ENCODE measurements at regions of chr2 and their contacts with region 1.

Region 1: GRCh38 chr2:85561317-85561979 is at the start of gene GGCX:
- DNase-seq: peak; percentile 95
- H3K4me3 ChIP-seq: peak within 1 kb of the TSS; percentile 69 to 70
- H3K27ac ChIP-seq: peak within 1 kb of the TSS; percentile 80 to 84
- H3K4me1 ChIP-seq: peaks cover 3% of the 10 kb centered on the region
- H3K27me3 ChIP-seq: no peaks in the 10 kb centered on the region
- CTCF ChIP-seq: peak in 3 of 4 experiments; percentile 46 to 77 (median 54)
- POLR2A ChIP-seq: peak; percentile 80
- total RNA-seq, gene GGCX: 17.8 to 52.7 TPM

Region 2: DNA sequence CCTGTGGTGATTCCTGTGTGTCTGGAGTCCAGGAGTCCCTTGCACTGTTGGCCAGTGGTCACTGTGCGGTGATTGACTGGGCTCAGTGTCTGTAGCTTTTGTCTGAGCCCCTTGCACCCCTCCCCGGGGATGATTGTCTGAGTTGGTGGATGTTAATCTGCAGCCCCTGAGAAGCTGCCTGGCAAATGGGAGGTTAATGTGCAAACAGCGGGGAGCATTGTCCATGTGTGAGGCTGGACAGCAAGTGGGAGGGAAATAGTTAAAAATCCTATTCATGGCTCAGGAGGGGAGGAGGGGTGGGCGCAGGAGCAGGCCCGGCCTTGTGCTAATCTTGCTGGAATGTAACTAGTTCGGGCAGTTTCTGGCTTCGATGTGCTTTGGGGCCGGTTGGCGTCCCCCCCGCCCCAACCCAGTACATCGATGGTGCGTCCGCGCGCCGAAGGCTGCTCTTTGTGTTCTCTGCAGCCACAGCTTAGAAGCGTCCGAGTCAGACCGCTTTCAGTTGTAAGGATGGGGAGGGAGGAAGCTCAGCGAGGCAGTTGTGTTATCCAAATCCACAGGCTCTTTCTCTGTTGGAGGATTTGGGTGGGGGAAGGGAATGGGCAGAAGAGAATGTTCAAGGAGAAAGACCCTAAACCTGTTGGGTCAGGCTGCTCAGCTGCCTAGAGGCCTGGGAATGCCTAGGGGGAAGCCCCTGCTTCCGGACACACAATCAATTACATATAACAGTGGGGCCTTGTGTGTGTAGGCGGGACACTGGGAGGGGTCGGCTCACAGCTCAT is 305.4 kb before region 1 on chr2:
- intact Hi-C with region 1: no loop called
- DNase-seq: peak; percentile 47
- H3K4me3 ChIP-seq: no peak overlapping the region
- H3K27ac ChIP-seq: peak overlapping the region in 1 of 2 donors; percentile 39
- H3K4me1 ChIP-seq: peaks cover 15% of the 10 kb centered on the region
- H3K27me3 ChIP-seq: no peaks in the 10 kb centered on the region
- CTCF ChIP-seq: no peak
- POLR2A ChIP-seq: no peak

Region 3: DNA sequence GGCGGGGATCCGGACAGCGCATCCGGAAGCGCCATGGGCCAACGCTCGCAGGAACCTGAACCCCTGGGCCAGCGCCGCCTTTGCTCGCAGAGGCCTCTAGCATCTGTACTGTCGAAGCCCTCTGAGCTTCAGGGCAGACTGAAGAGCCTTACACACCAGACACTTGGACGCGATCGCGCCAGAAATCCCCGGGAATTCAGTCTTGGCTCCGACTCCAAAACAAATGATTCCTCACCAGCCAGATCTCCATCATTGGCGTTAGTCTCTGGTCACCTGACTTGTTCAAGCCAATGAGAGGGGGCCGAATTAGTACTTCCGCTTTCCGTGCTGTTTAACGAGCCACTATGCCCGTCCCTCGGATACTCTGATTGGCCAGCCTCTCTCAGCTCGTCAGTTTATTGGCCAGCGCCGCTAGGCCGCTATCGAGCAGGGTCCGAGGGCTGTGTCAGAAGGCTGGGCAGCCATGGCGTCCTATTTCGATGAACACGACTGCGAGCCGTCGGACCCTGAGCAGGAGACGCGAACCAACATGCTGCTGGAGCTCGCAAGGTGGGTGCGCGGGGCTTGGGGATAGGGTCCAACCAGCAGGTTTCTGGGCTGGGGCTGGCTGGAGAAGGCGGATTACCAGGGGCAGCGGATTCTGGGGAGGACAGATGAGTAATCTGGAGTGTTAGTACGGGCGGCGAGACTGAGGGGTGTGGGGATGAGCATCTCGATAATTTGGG is 34.0 kb after region 1 on chr2 and contains the start of gene RNF181:
- intact Hi-C with region 1: loop called (anchors 5 kb)
- DNase-seq: peak; percentile 98
- H3K4me3 ChIP-seq: peak within 1 kb of the TSS; percentile 84 to 87
- H3K27ac ChIP-seq: peak within 1 kb of the TSS; percentile 89 to 93
- H3K4me1 ChIP-seq: peaks cover 12% of the 10 kb centered on the region
- H3K27me3 ChIP-seq: no peaks in the 10 kb centered on the region
- CTCF ChIP-seq: no peak
- POLR2A ChIP-seq: peak; percentile 89
- total RNA-seq, gene RNF181: 161 to 201 TPM

Region 4: DNA sequence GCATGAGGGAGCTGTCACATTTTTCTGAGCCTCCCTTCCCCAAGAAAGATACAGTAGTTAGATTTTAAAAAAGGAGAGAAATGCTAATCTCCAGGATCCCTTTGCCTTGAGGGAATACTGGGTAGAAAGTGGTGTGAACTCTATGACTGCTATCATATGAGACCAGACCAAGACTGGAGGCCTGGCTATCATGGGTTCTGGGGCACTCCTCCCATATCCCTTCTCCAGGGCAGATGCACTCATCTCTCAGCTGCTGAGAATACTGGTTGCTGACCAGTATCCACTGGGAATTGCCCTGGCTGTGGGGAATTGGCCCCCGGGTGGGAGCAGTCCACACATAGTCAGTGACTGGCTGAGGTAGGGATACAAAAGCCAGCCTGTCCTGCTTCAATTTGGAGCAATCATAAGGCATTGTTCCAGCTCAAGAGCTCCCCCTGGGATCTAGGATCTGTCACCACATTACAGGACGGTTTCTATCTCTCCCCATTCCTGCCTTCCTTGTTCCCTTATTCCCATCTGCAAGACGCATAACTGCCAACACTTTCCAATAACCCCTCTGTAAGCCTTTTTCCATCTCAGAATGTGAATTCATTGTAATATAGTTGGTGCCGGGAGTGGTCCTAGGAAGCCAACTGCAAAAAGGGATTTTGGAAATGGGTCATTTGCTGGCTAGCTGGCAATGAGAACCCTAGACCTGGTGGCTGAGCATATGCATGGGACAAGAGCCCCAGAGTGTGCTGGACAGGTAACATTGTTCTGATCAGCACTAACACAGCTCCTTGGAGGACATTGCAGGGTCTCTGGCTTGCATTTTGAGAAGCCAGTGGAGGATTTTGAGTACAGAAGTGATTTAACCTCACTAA is 811.4 kb after region 1 on chr2:
- intact Hi-C with region 1: no loop called
- DNase-seq: peak; percentile 22
- H3K4me3 ChIP-seq: no peak overlapping the region
- H3K27ac ChIP-seq: no peak overlapping the region
- H3K4me1 ChIP-seq: no peaks in the 10 kb centered on the region
- H3K27me3 ChIP-seq: no peaks in the 10 kb centered on the region
- CTCF ChIP-seq: peak in 3 of 4 experiments; percentile 23 to 56 (median 45)
- POLR2A ChIP-seq: no peak